ENCODE measurements at regions of chr9 and their contacts with region 1.

Region 1: GRCh38 chr9:126682928-126683697 is 69.4 kb downstream of the LMX1B start:
- DNase-seq: peak; percentile 61 to 83 (median 79)
- ATAC-seq: peak; percentile 14 to 38
- H3K4me3 ChIP-seq: peak overlapping the region; percentile 51
- H3K27ac ChIP-seq: no peak overlapping the region
- H3K4me1 ChIP-seq: no peaks in the 10 kb centered on the region
- H3K27me3 ChIP-seq: no peaks in the 10 kb centered on the region

Region 2: GRCh38 chr9:126500684-126501382 is 182.3 kb before region 1 on chr9:
- intact Hi-C with region 1: loop called in 1 of 4 experiments (anchors 10 kb)
- DNase-seq: peak; percentile 79 to 92 (median 91)
- ATAC-seq: peak; percentile 74
- H3K4me3 ChIP-seq: no peak overlapping the region
- H3K27ac ChIP-seq: no peak overlapping the region
- H3K4me1 ChIP-seq: no peaks in the 10 kb centered on the region
- H3K27me3 ChIP-seq: no peaks in the 10 kb centered on the region

Region 3: GRCh38 chr9:126604059-126605055 is 78.8 kb before region 1 on chr9:
- intact Hi-C with region 1: loop called in 1 of 4 experiments (anchors 5 kb)
- DNase-seq: peak; percentile 57 to 84 (median 74)
- ATAC-seq: peak; percentile 78 to 92
- H3K4me3 ChIP-seq: no peak overlapping the region
- H3K27ac ChIP-seq: peak overlapping the region; percentile 45
- H3K4me1 ChIP-seq: no peaks in the 10 kb centered on the region
- H3K27me3 ChIP-seq: no peaks in the 10 kb centered on the region

Region 4: GRCh38 chr9:126611592-126612325 is 71.4 kb before region 1 on chr9:
- intact Hi-C with region 1: loop called in 3 of 4 experiments (anchors 5 to 10 kb)
- DNase-seq: peak; percentile 82 to 94 (median 93)
- ATAC-seq: peak; percentile 71 to 80
- H3K4me3 ChIP-seq: no peak overlapping the region
- H3K27ac ChIP-seq: no peak overlapping the region
- H3K4me1 ChIP-seq: no peaks in the 10 kb centered on the region
- H3K27me3 ChIP-seq: no peaks in the 10 kb centered on the region